ENCODE measurements at regions of chr2 and their contacts with region 1.

Region 1: DNA sequence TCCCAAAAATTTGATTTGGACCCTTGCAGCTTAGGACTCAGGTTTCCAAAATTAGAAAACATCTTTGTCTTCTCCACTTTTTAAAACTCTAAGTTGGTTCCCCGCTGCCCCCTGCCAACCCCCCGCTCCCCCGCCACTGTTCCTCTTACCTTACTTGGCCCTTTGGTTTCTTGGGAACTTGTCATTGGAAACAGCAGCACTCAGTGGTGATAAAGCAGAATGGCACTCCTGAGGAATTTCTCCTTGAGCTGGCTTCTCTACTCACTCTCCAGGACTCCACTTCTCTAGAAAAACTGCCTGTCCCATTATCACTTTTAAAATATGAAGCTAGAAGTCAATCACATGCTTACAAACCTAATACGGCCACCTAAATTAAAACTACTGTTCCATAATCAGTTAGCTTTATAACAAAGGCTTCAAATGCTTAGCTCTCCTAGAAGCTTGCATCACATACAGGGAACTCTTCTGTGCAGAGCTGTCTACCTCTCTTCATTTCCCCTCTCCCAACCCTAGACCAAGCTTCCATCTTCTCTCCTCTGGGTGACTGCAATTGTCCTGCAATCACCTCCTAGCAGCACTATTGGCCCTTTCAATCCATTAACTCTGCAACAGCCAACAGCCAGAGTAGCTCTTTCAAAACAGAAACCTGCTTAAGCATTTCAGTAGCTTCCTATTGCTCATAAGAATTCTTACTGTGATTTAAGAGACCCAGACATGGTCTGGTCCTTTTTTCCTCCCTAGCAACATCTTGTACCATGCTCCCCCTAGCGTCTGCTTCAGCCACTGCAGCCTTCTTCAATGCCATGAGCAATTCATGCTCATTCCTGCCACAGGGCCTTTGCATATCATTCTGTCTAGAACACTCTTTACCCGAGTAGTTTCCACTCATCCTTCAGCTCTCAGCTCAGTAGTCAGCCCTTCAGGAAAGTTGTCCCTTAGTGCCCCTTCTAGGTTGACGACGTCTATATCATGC is 15.2 kb upstream of the PLEKHM3 start:
- DNase-seq: peak; percentile 38
- H3K4me3 ChIP-seq: no peak overlapping the region
- H3K27ac ChIP-seq: no peak overlapping the region
- H3K27me3 ChIP-seq: no peaks in the 10 kb centered on the region
- CTCF ChIP-seq: peak; percentile 89

Region 2: GRCh38 chr2:207734264-207734635 is 306.2 kb before region 1 on chr2:
- CTCF ChIA-PET with region 1: interaction called, 20 read pairs
- POLR2A ChIA-PET with region 1: no interaction called
- DNase-seq: no peak
- H3K4me3 ChIP-seq: no peak overlapping the region
- H3K27ac ChIP-seq: no peak overlapping the region
- H3K27me3 ChIP-seq: no peaks in the 10 kb centered on the region
- CTCF ChIP-seq: peak; percentile 70

Region 3: DNA sequence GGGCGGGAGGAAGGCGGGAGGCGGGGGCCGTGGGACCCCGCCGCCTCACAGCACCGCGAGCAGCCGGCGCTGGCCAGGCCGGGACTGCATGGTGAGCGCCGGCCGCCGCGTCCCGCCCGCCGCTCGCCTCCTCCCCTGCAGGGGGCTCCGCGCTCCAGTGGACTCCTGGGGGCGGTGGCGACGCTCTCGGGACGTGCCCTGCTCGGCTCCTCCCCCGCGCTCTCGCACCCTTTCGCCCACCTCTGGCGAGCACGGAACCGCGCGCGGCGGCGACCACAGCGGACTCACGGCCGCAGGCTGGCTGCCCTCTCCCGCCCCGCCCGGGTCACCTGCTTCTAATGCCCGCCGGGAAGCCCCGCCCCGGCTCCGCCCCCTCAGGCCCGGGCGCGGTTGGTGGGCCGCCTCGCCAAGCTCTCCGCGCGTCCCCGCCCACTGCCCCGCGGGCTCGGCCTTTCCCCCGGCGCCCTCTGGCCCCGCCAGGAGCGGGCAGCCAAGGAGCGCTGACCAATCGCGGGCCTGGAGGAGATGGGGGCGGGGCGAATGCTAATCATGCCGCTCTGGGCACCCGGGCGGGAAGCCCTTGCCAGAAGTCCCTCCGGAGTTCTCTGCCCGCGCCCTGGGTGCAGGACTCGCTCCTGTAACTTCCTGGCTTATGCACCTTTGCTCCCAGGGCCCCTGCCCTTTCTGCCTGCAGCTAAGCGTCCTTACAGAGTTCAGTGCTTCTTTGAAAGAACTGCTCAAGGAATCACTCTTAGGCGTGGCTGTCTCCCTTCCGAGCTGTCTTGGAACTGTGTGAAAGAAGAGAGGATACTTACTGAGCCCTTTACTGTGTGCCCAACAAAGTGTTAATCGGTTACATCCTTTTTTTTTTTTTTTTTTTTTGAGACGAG is 270.6 kb before region 1 on chr2 and contains the start of gene FZD5:
- CTCF ChIA-PET with region 1: interaction called, 31 read pairs
- POLR2A ChIA-PET with region 1: no interaction called
- DNase-seq: no peak
- H3K4me3 ChIP-seq: peak within 1 kb of the TSS; percentile 69
- H3K27ac ChIP-seq: no peak within 1 kb of the TSS
- H3K27me3 ChIP-seq: peaks cover 9% of the 10 kb centered on the region
- CTCF ChIP-seq: peak; percentile 44
- polyA plus RNA-seq, gene FZD5: 0.09 and 0.11 TPM in 2 replicates

Region 4: GRCh38 chr2:207879536-207879935 is 160.9 kb before region 1 on chr2:
- CTCF ChIA-PET with region 1: interaction called, 12 read pairs
- POLR2A ChIA-PET with region 1: no interaction called
- DNase-seq: peak; percentile 4
- H3K4me3 ChIP-seq: no peak overlapping the region
- H3K27ac ChIP-seq: no peak overlapping the region
- H3K27me3 ChIP-seq: no peaks in the 10 kb centered on the region
- CTCF ChIP-seq: no peak

Region 5: GRCh38 chr2:208006833-208007232 is 33.7 kb before region 1 on chr2:
- CTCF ChIA-PET with region 1: interaction called, 27 read pairs
- POLR2A ChIA-PET with region 1: no interaction called
- DNase-seq: no peak
- H3K4me3 ChIP-seq: no peak overlapping the region
- H3K27ac ChIP-seq: no peak overlapping the region
- H3K27me3 ChIP-seq: no peaks in the 10 kb centered on the region
- CTCF ChIP-seq: no peak

Region 6: GRCh38 chr2:208062113-208062512 is 21.6 kb after region 1 on chr2:
- CTCF ChIA-PET with region 1: interaction called, 23 read pairs
- POLR2A ChIA-PET with region 1: no interaction called
- DNase-seq: no peak
- H3K4me3 ChIP-seq: no peak overlapping the region
- H3K27ac ChIP-seq: no peak overlapping the region
- H3K27me3 ChIP-seq: no peaks in the 10 kb centered on the region
- CTCF ChIP-seq: peak; percentile 48

Region 7: GRCh38 chr2:208671284-208671683 is 630.8 kb after region 1 on chr2:
- CTCF ChIA-PET with region 1: no interaction called
- POLR2A ChIA-PET with region 1: no interaction called
- DNase-seq: no peak
- H3K4me3 ChIP-seq: no peak overlapping the region
- H3K27ac ChIP-seq: no peak overlapping the region
- H3K27me3 ChIP-seq: no peaks in the 10 kb centered on the region
- CTCF ChIP-seq: no peak